ENCODE measurements at regions of chr20 and their contacts with region 1.

Region 1: GRCh38 chr20:20860078-20860806 is 147.8 kb upstream of the RALGAPA2 start:
- DNase-seq: peak; percentile 89
- ATAC-seq: peak; percentile 78 to 92

Region 2: GRCh38 chr20:21125849-21126580 is 265.8 kb after region 1 on chr20 and contains the start of gene KIZ:
- intact Hi-C with region 1: loop called in 1 of 2 experiments (anchors 10 kb)
- DNase-seq: peak; percentile 97
- ATAC-seq: peak; percentile 99 to 100
- total RNA-seq, gene KIZ: 15.1 to 25.4 TPM

Region 3: GRCh38 chr20:21380711-21381110 is 520.5 kb after region 1 on chr20:
- intact Hi-C with region 1: no loop called
- DNase-seq: no peak
- ATAC-seq: no peak

Region 4: DNA sequence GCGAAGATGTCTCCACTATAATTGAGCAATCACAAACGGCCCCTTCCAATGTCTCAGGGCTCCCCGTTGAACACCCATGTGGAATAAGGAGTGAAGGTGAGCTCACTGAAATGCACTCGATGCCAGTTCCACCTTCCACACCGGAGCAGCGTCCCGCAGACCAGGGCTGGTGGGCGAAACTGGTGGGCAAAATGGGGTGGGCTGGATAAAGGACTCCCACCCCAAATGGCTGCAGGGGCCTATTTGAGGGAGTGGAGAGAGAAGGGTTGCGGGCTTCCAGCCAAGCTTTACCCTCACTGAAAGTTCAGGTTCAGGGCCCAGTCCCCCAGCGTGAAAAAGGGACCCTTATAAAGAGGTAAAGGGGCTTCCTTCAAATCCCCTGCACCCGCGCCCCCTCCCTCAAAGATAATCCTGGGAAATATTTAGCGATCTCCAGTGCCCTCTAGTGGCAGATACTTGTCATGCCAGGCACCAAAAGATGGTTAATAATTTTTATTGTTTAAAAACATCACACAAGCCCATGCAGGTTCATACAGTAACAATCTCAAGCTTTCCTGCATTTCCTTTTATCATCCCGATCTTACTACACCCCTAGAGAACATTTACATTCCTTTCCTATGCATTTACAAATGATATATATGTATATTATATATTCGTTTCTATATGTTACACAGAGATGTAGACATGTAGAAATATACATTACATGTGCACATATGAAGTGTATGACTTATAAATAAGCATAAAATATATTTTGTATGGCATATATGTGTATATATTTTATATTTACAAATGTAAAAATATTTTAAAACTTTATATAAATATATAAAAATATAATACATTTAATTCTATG is 711.8 kb after region 1 on chr20:
- intact Hi-C with region 1: loop called (anchors 5 to 10 kb)
- DNase-seq: no peak
- ATAC-seq: no peak

Measured in left cardiac atrium (tissue), 4 donors.